SK-N-SH (cell line): ENCODE measurements at regions of chr3 and their contacts with region 1.

Region 1: GRCh38 chr3:58299839-58300516 is 6.1 kb upstream of the RPP14 start:
- DNase-seq: peak; percentile 47
- H3K4me3 ChIP-seq: no peak overlapping the region
- H3K27ac ChIP-seq: no peak overlapping the region
- H3K4me1 ChIP-seq: no peaks in the 10 kb centered on the region; a peak in 1 of 4 replicates
- H3K27me3 ChIP-seq: no peaks in the 10 kb centered on the region; the same call in 1 of the 2 replicates
- CTCF ChIP-seq: peak; percentile 85
- EP300 ChIP-seq: no peak
- RAD21 ChIP-seq: peak; percentile 79

Region 2: DNA sequence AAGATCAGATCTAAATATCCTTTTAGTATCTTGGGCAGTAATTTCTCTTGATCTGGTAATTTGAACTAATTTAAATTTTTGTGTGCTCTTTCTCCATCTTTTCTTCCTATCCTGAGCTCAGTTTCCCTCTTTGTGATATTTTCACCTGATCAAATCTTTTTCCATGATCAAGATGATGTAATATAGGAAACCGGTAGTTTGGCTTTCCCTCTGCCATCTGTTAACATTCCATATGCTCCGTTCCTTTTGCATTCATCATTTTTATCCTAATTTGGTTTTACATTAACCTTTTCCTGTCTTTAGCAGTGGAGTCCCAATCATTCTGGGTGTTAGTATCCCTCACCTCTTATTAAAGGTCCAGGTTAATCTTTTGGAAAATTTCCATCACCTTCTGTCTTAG is 68.3 kb before region 1 on chr3:
- CTCF ChIA-PET with region 1: interaction called, 10 read pairs
- POLR2A ChIA-PET with region 1: no interaction called
- DNase-seq: no peak
- H3K4me3 ChIP-seq: no peak overlapping the region
- H3K27ac ChIP-seq: no peak overlapping the region
- H3K4me1 ChIP-seq: peaks cover 0 to 3% of the 10 kb centered on the region in 2 experiments; a peak in 1 of 4 replicates
- H3K27me3 ChIP-seq: no peaks in the 10 kb centered on the region; the same call in 1 of the 2 replicates
- CTCF ChIP-seq: no peak
- EP300 ChIP-seq: no peak
- RAD21 ChIP-seq: no peak

Region 3: DNA sequence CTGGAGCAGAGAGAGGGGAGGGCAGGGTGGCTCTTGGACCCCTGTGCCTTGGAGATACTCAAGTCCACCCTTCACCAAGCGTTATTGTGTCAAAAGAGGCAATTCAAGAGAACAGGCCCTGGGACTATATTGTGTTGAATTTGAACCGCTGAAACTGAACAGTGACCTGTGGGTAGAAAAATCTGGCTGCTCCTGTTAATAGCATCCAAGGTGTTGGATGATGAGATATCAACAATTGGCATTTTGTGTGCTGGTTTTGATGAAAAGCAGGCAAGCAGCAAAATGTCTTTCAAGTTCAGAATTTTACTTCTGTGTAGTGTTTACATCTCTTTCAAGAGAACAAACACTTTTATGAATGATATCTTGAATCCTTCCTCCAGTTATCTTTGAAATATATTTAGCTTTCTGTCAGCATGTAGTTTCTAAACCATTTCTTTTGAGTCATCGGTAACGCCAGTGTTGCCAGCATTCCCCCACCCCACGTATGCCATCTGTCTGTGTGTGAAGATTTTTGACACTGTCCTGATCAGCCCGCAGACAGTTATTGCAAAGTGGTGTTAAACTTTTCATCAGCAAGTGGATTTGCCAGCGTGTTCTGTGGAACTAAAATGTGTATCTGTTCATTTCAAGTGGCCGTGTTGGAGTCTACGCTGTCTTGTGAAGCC is 98.8 kb after region 1 on chr3:
- CTCF ChIA-PET with region 1: no interaction called
- POLR2A ChIA-PET with region 1: no interaction called
- DNase-seq: no peak
- H3K4me3 ChIP-seq: no peak overlapping the region
- H3K27ac ChIP-seq: no peak overlapping the region
- H3K4me1 ChIP-seq: no peaks in the 10 kb centered on the region
- H3K27me3 ChIP-seq: no peaks in the 10 kb centered on the region
- CTCF ChIP-seq: no peak
- EP300 ChIP-seq: no peak
- RAD21 ChIP-seq: no peak